ENCODE measurements at regions of chr19 and their contacts with region 1.

Region 1: DNA sequence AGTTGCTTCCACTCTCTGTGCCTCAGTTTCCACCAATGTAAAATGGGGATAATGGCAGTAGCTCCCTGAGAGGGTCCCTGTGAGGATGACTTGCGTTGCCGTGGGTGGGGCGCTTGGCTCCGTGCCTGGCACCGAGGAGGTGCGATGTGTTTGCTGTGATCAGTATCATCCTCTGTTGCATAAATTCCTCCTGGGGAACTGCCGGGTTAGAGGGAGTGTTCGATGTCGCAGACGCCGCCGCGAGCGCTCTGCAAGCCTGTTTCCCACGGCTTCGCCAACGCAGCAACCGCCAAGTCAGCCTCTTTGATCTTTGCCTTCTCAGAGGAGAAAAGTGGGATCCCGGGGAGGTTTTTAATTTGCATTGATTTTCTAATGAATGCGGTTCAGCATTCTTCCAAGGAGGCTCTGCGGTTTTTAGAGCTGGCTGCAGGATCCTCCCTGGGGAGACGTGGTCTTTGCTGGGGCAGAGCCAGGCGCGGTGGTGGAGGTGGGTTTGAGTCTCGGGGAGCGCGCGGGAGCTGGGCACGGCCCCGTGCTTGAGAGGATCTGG is 7.6 kb downstream of the GPR32 start:
- DNase-seq: no peak
- H3K4me3 Mint-ChIP-seq: no peak overlapping the region
- H3K27ac Mint-ChIP-seq: no peak overlapping the region
- H3K4me1 Mint-ChIP-seq: peaks cover 9% of the 10 kb centered on the region
- H3K27me3 Mint-ChIP-seq: peaks cover 48% of the 10 kb centered on the region

Region 2: GRCh38 chr19:50537762-50538230 is 240.0 kb before region 1 on chr19:
- intact Hi-C with region 1: loop called (anchors 1 kb)
- DNase-seq: peak; percentile 43
- H3K4me3 Mint-ChIP-seq: no peak overlapping the region
- H3K27ac Mint-ChIP-seq: no peak overlapping the region
- H3K4me1 Mint-ChIP-seq: no peaks in the 10 kb centered on the region
- H3K27me3 Mint-ChIP-seq: peaks cover 3% of the 10 kb centered on the region

Region 3: GRCh38 chr19:50705422-50706019 is 72.3 kb before region 1 on chr19:
- intact Hi-C with region 1: loop called (anchors 1 kb)
- DNase-seq: no peak
- H3K4me3 Mint-ChIP-seq: no peak overlapping the region
- H3K27ac Mint-ChIP-seq: no peak overlapping the region
- H3K4me1 Mint-ChIP-seq: no peaks in the 10 kb centered on the region
- H3K27me3 Mint-ChIP-seq: peaks cover 16% of the 10 kb centered on the region

Region 4: GRCh38 chr19:50724522-50725217 is 53.2 kb before region 1 on chr19:
- intact Hi-C with region 1: loop called (anchors 1 kb)
- DNase-seq: peak; percentile 98
- H3K4me3 Mint-ChIP-seq: peak overlapping the region; percentile 86
- H3K27ac Mint-ChIP-seq: peak overlapping the region; percentile 77
- H3K4me1 Mint-ChIP-seq: peaks cover 20% of the 10 kb centered on the region
- H3K27me3 Mint-ChIP-seq: peaks cover 39% of the 10 kb centered on the region

Measured in activated T-helper 2 cell treated with anti-CD3 and anti-CD28 coated beads, Interferon-gamma antibody, Interleukin-2, Interleukin-4, amounts not matched to agents 10 μg/mL and 5 μg/mL and 100 μg/mL, durations not matched to agents 14 hours and 24 hours and 36 hours (primary cell).